Right ventricle myocardium superior (tissue), 1 donor: ENCODE measurements at regions of chr3 and their contacts with region 1.

Region 1: DNA sequence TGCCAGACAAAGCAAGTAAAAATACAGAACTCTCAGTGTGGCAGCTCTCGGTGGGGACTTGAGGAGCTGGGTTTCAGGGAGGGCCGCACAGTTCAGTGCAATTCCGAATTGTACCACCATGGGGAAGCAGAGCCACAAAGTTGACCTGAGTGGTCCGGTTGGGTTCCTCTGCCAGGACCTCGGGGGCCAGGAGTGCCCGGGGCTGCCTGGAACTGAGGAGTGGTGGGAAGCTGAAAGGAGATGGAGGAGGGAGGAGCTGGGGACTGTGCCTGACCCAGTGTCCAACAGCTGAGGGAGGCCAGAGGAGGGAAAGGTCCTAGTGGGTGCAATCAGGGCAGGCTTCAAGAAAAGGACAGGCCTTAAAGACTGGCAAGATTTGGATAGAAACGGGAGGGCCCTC is 32.2 kb upstream of the TRH start:
- DNase-seq: peak; percentile 69
- ATAC-seq: peak; percentile 93

Region 2: GRCh38 chr3:129994883-129995559 is 52.7 kb after region 1 on chr3:
- intact Hi-C with region 1: loop called (anchors 5 kb)
- DNase-seq: no peak
- ATAC-seq: no peak

Region 3: GRCh38 chr3:130111185-130111864 is 169.0 kb after region 1 on chr3:
- intact Hi-C with region 1: loop called (anchors 10 kb)
- DNase-seq: peak; percentile 99
- ATAC-seq: peak; percentile 100